Right lobe of liver (tissue), 6 donors: ENCODE measurements at regions of chr2 and their contacts with region 1.

Region 1: DNA sequence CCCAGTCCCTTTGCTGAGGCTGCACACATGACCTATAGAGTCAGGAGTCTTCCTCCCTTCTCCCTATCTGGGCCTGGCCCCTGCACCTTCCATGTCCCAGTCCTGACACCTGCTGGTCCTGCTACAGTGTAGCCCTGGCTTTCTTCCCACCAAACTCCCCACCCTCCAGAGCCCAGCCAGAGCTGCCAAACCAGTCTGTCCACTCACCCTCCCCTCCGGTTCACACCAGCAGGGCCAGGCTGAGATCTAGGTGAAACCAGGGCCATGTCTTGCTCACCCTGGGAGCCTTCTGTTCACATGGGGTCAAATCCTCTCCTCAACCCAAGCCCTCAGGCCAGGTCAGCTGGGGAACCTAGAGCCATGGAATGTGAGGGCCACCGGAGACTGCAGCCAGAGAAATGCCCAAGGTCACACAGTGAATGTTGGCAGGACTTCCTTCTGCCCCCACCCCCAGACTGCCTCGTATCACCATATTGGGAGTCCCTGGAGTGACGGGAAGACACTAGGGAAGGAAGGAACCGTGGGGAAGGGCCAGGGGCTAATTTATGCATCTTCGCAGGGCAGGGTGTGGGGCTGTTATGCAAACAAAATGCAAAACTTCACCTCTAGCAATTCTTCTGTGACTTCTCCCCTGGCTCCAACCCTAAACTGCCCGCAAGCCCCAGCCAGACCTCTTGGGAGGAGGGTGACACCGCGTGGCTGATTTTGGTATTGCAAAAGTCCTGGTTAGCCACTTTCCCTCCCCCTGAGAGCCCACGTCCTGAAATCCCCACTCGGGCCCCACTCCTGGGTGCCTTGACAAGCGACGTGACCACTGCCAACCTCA is 14.6 kb downstream of the TNS1 start:
- DNase-seq: peak; percentile 86 to 87 (median 87)
- ATAC-seq: peak; percentile 89 to 94 (median 92)
- H3K4me3 ChIP-seq: no peak overlapping the region
- H3K27ac ChIP-seq: peak overlapping the region; percentile 47 to 53 (median 49)
- H3K4me1 ChIP-seq: peaks cover 0 to 14% (median 5%) of the 10 kb centered on the region in 4 donors
- H3K27me3 ChIP-seq: no peaks in the 10 kb centered on the region
- CTCF ChIP-seq: peak; percentile 85 to 91 (median 88)
- POLR2A ChIP-seq: no peak

Region 2: GRCh38 chr2:217899231-217900009 is 88.8 kb before region 1 on chr2:
- intact Hi-C with region 1: loop called in 1 of 2 experiments (anchors 10 kb)
- DNase-seq: peak in 2 of 3 donors; percentile 71 to 80
- ATAC-seq: peak; percentile 5 to 30 (median 14)
- H3K4me3 ChIP-seq: no peak overlapping the region
- H3K27ac ChIP-seq: peak overlapping the region; percentile 70 to 87 (median 81)
- H3K4me1 ChIP-seq: peaks cover 0 to 81% (median 50%) of the 10 kb centered on the region in 4 donors
- H3K27me3 ChIP-seq: no peaks in the 10 kb centered on the region
- CTCF ChIP-seq: peak; percentile 55 to 74 (median 58)
- POLR2A ChIP-seq: no peak

Region 3: GRCh38 chr2:217934321-217935131 is 53.7 kb before region 1 on chr2:
- intact Hi-C with region 1: loop called in 1 of 2 experiments (anchors 10 kb)
- DNase-seq: peak in 2 of 3 donors; percentile 64 to 73
- ATAC-seq: peak; percentile 23 to 48 (median 33)
- H3K4me3 ChIP-seq: peak overlapping the region; percentile 9 to 36 (median 16)
- H3K27ac ChIP-seq: peak overlapping the region; percentile 64 to 97 (median 89)
- H3K4me1 ChIP-seq: peaks cover 0 to 97% (median 46%) of the 10 kb centered on the region in 4 donors
- H3K27me3 ChIP-seq: no peaks in the 10 kb centered on the region
- CTCF ChIP-seq: no peak
- POLR2A ChIP-seq: no peak

Region 4: GRCh38 chr2:217947383-217948350 is 40.6 kb before region 1 on chr2:
- intact Hi-C with region 1: loop called in 1 of 2 experiments (anchors 5 kb)
- DNase-seq: no peak
- ATAC-seq: no peak
- H3K4me3 ChIP-seq: no peak overlapping the region
- H3K27ac ChIP-seq: no peak overlapping the region
- H3K4me1 ChIP-seq: peaks cover 0 to 19% (median 7%) of the 10 kb centered on the region in 4 donors
- H3K27me3 ChIP-seq: no peaks in the 10 kb centered on the region
- CTCF ChIP-seq: peak in 2 of 4 donors; percentile 8 to 19
- POLR2A ChIP-seq: no peak